ENCODE measurements at regions of chr1 and their contacts with region 1.

Region 1: GRCh38 chr1:61043010-61043820 is 39.1 kb upstream of the NFIA start:
- DNase-seq: peak; percentile 28
- ATAC-seq: peak; percentile 99
- H3K4me3 ChIP-seq: peak overlapping the region; percentile 34 to 54
- H3K27ac ChIP-seq: no peak overlapping the region
- H3K4me1 ChIP-seq: peaks cover 0 to 9% of the 10 kb centered on the region in 2 experiments; a peak in 1 of 4 replicates
- H3K27me3 ChIP-seq: no peaks in the 10 kb centered on the region
- CTCF ChIP-seq: peak; percentile 75 to 81 (median 77)
- POLR2A ChIP-seq: no peak
- RAD21 ChIP-seq: peak; percentile 86

Region 2: GRCh38 chr1:60153961-60154360 is 889.3 kb before region 1 on chr1:
- CTCF ChIA-PET with region 1: no interaction called
- POLR2A ChIA-PET with region 1: no interaction called
- RAD21 ChIA-PET with region 1: no interaction called
- intact Hi-C with region 1: loop called (anchors 2 kb)
- DNase-seq: no peak
- ATAC-seq: no peak
- H3K4me3 ChIP-seq: no peak overlapping the region
- H3K27ac ChIP-seq: no peak overlapping the region
- H3K4me1 ChIP-seq: no peaks in the 10 kb centered on the region
- H3K27me3 ChIP-seq: peaks cover 21% of the 10 kb centered on the region
- CTCF ChIP-seq: no peak
- POLR2A ChIP-seq: no peak
- RAD21 ChIP-seq: no peak

Region 3: DNA sequence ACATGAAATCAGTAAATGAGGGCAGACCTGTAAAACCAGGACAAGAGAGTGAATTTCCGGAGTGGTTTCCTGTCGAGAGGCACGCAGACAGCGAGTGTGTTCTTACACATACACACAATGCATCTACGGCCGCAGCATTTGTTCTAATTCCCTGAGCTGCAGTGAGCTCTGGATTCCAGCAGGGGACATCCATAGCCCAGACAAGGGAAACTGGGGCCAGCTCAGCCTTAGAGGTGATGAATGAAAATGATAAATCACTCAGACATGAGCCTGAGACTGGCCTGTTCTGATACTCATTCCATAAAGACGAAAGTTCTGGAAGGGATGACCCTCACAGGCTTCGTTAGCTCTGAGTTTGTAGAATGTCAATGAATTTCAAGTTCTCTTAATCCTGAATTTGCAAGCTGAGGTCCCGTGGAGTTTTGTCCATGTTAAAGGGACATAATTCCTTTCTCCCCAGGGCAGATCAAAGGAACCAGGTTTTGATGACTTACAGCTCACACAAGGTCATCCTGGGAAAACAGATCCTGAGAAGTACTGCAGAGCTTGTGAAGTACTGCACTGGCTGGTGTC is 761.8 kb before region 1 on chr1:
- CTCF ChIA-PET with region 1: interaction called, 12 read pairs
- POLR2A ChIA-PET with region 1: no interaction called
- RAD21 ChIA-PET with region 1: interaction called in 1 of 2 experiments, 4 read pairs
- intact Hi-C with region 1: loop called (anchors 5 kb)
- DNase-seq: peak; percentile 83
- ATAC-seq: peak; percentile 96
- H3K4me3 ChIP-seq: peak overlapping the region in 1 of 2 experiments; percentile 19; a peak in 1 of 4 replicates
- H3K27ac ChIP-seq: no peak overlapping the region
- H3K4me1 ChIP-seq: peaks cover 5 to 24% of the 10 kb centered on the region in 2 experiments; a peak in 3 of 4 replicates
- H3K27me3 ChIP-seq: no peaks in the 10 kb centered on the region
- CTCF ChIP-seq: peak; percentile 82 to 95 (median 94)
- POLR2A ChIP-seq: no peak
- RAD21 ChIP-seq: peak; percentile 98

Region 4: DNA sequence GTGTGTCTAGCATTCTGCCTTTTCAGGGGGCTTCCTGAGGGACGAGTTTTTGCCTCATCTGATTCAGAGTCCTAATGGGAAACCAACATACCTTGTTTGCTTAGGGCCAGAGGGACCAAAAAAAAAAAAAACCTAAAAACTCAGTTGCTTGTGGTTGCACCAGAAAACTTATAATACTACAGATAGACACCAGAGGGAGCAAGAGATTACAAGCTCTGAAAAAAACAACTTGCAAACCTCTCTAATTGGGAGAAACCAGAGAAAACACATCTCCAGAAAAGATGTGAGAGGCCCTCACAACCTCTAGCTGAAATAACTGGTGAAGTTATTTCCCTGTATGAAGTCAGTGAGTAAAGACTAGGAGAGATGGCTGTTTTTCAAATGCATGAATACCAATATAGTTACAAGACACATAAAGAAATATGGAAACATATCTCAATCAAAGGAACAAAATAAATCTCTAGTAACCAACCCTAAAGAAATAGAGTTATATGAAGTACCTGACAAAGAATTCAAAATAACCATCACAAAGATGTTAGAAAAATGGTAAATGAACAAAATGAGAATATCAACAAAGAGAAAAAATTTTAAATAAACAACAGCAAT is 194.5 kb before region 1 on chr1:
- CTCF ChIA-PET with region 1: interaction called, 14 read pairs
- POLR2A ChIA-PET with region 1: no interaction called
- RAD21 ChIA-PET with region 1: interaction called in 1 of 2 experiments, 7 read pairs
- intact Hi-C with region 1: loop called (anchors 1 kb)
- DNase-seq: peak; percentile 54
- ATAC-seq: peak; percentile 69
- H3K4me3 ChIP-seq: no peak overlapping the region
- H3K27ac ChIP-seq: no peak overlapping the region
- H3K4me1 ChIP-seq: no peaks in the 10 kb centered on the region
- H3K27me3 ChIP-seq: no peaks in the 10 kb centered on the region
- CTCF ChIP-seq: peak; percentile 51 to 69 (median 60); a peak in 4 of 6 replicates
- POLR2A ChIP-seq: no peak
- RAD21 ChIP-seq: peak; percentile 74

Region 5: DNA sequence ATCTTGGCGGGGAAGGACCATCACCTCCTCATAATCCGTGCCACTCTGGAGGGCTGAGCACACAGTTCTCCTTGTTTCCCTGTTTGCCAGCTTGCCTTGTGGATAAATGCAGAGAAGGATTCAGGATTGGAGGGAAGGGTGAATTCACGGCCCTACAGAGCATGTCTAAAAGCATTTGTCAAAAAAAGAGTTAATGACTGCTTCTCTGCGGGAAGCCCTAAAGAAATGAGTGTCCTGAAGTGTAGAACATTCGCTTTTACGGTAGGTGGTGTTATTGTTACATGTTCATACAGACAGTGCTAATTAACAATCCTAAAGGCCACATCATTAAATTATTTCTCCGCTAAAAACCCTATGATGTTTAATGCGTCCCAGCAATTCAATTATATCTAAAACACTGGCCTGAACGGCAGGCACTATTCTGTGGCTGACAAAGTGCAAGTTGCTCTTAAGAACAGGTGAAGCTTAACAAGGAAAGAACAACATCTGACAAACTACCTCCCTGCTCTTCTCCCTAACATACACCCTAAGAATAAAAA is 73.2 kb before region 1 on chr1:
- CTCF ChIA-PET with region 1: interaction called, 6 read pairs
- POLR2A ChIA-PET with region 1: no interaction called
- RAD21 ChIA-PET with region 1: no interaction called
- intact Hi-C with region 1: loop called (anchors 2 kb)
- DNase-seq: no peak
- ATAC-seq: peak; percentile 74
- H3K4me3 ChIP-seq: no peak overlapping the region
- H3K27ac ChIP-seq: no peak overlapping the region
- H3K4me1 ChIP-seq: peaks cover 0 to 10% of the 10 kb centered on the region in 2 experiments; a peak in 3 of 4 replicates
- H3K27me3 ChIP-seq: no peaks in the 10 kb centered on the region
- CTCF ChIP-seq: peak in 2 of 3 experiments; percentile 50 to 59; a peak in 3 of 6 replicates
- POLR2A ChIP-seq: no peak
- RAD21 ChIP-seq: peak; percentile 80

Region 6: DNA sequence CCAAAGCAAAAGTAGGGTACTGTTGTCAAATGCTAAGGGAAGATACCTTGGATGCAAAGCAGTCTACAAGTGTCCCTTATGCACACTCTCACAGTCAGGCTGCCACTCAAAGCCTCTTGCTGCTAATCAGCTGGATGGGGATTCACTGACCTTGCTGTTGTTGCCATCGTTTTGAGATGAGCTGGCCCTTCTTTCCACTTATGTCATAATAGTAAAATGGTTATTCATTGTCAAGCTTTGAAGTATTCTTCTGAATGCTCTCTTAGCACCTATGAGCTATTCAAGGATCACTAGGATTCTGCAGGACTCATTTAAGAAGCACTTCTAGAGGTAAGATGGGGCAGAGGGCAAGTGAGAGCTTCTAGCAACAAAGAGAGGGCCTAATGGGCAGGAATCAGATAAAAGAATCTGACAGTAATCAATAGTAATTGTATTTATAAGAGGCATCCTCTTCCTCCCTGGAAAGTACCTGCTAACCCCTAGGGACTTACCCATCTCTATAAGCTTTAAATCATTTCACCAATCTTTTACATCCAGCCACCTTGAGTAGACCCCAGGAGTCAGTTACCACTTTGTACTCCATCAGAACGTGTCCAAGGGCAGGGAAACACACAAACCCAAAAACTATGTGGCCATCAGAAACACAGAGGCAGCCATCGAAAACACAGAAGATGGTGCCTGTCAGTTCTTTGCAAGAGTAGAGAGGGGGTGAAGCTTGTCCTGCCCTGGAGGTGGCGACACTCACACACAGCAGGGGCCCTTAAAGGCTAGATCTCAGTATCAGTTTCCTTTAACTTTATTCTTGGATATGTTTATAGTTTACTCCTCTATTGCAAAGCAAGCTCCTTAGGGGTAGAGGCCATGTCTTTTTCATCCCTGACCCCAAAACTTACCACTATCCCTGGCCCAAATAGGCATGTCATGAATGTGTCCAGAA is 64.5 kb before region 1 on chr1:
- CTCF ChIA-PET with region 1: interaction called, 36 read pairs
- POLR2A ChIA-PET with region 1: no interaction called
- RAD21 ChIA-PET with region 1: no interaction called
- intact Hi-C with region 1: loop called (anchors 2 kb)
- DNase-seq: no peak
- ATAC-seq: peak; percentile 95
- H3K4me3 ChIP-seq: no peak overlapping the region
- H3K27ac ChIP-seq: no peak overlapping the region
- H3K4me1 ChIP-seq: no peaks in the 10 kb centered on the region
- H3K27me3 ChIP-seq: no peaks in the 10 kb centered on the region
- CTCF ChIP-seq: peak; percentile 71 to 74 (median 74); a peak in 5 of 6 replicates
- POLR2A ChIP-seq: no peak
- RAD21 ChIP-seq: peak; percentile 88